Mucosa of descending colon (tissue), 3 donors: ENCODE measurements at regions of chr2 and their contacts with region 1.

Region 1: GRCh38 chr2:176554101-176555048 is 285.1 kb downstream of the MTX2 start:
- DNase-seq: peak in 1 of 3 donors; percentile 33
- ATAC-seq: peak; percentile 80
- H3K4me3 ChIP-seq: no peak overlapping the region
- H3K4me1 ChIP-seq: no peaks in the 10 kb centered on the region
- CTCF ChIP-seq: peak; percentile 54

Region 2: GRCh38 chr2:176454893-176455811 is 99.2 kb before region 1 on chr2:
- intact Hi-C with region 1: loop called (anchors 10 kb)
- DNase-seq: peak; percentile 70 to 98 (median 88)
- ATAC-seq: peak; percentile 90
- H3K4me3 ChIP-seq: no peak overlapping the region
- H3K4me1 ChIP-seq: no peaks in the 10 kb centered on the region
- CTCF ChIP-seq: peak; percentile 80